ENCODE measurements at regions of chr17 and their contacts with region 1.

Region 1: DNA sequence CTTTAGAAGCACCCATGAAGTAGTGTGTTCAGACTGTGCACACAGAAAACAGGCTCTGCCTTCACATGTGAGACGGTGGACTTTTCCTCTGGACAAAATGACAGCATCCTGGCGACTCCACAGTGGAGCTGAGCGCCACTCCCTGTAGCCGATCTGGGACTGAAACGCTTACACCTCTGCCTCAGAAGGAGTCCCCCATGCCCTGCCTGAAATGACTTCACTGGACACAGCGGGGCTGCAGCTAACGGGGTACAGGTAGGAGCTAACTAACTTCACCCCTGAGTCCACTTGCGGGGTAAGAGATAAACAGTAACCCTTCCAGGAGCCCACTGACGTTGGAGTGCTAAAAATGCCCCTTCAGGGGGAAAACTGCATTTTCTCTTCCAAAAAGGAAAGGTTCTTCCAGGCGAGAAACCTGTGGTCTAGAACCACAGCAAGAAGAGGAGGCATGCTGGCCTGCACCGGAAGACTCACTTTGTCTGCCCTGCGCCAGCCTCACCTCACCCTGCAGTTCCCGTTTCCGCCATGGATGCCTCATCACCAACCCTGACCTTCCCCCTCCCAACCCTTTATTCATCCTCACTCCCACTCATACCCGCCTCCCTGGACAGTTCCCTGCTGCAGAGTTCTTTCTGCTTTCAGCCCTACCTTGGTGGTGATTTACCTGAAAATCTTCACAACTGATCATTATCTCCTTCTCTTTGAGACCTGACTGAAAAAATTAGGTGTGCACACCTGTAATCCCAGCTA is 19.4 kb upstream of the ENDOV start:
- DNase-seq: no peak
- H3K4me3 Mint-ChIP-seq: no peak overlapping the region
- H3K27ac Mint-ChIP-seq: no peak overlapping the region
- H3K4me1 Mint-ChIP-seq: peaks cover 20% of the 10 kb centered on the region
- H3K27me3 Mint-ChIP-seq: no peaks in the 10 kb centered on the region

Region 2: DNA sequence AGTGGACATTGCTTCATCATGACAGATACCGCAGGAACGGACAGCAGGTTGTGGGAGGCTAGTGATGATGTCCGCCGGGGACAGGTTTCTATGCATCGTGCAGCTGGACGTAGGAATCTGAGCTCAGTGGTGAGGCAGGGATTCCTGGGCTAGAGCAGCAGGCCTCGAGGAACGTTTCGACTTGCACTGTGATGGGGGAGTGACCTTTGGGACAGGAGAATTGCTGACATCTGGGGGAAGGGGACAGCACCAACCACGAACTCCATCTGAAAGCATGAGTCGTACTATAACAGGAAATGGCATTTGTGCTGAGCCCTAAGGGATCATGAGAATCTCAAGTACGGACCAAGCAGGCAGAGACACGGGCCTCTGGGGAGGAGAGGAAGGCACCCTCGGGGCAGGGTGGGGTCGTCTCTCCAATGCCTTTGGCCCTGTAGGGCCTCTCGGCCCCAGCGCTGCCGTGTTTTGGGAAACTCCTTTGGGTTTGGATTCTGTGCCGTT is 46.4 kb before region 1 on chr17:
- CTCF ChIA-PET with region 1: no interaction called
- POLR2A ChIA-PET with region 1: no interaction called
- DNase-seq: no peak
- H3K4me3 Mint-ChIP-seq: no peak overlapping the region
- H3K27ac Mint-ChIP-seq: peak overlapping the region; percentile 22
- H3K4me1 Mint-ChIP-seq: peaks cover 24% of the 10 kb centered on the region
- H3K27me3 Mint-ChIP-seq: no peaks in the 10 kb centered on the region

Region 3: DNA sequence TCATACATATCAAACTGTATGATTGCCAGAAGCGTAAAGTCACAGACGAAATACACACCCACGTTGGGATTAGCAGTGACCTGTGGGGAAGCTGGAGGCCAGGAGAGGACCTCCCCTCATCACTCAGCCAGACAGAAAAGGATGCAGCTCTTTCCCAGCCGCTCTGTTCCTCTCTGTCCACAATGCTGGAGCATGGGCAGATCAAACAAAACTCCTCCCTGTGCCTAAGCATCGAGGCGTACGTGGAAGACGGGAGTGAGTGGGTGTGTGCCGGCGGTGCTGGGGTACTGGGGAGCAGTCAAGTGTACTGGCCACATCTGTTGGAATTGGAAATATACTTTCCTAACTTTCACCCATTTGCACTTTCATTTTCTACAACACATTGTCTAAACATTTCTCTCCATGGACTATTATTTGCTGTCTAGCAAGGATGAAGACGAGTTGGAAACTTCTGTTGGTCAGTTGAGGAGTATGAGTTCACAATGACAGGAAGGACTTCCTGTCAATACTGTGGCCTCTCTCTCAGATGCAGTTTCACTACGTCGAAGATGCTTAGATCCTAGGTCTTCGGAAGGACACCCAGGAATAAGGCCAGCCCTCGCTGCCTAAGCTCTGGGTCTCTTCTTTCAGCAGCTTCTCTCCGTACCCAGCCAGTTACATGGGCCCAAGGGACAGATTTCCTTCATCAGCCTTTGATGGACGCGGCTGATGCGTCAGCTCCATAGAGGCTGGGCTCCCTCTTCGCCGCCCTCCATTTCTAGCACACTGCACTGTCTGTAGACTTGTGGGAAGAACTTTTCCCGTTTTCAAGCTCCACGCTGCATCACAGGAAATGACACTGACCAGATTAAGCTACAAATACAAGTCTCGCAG is 11.3 kb before region 1 on chr17:
- CTCF ChIA-PET with region 1: no interaction called
- POLR2A ChIA-PET with region 1: interaction called, 26 read pairs
- DNase-seq: no peak
- H3K4me3 Mint-ChIP-seq: no peak overlapping the region
- H3K27ac Mint-ChIP-seq: peak overlapping the region; percentile 77
- H3K4me1 Mint-ChIP-seq: peaks cover 12% of the 10 kb centered on the region
- H3K27me3 Mint-ChIP-seq: no peaks in the 10 kb centered on the region

Measured in activated CD4-positive, alpha-beta memory T cell treated with anti-CD3 and anti-CD28 coated beads, Interleukin-2, amount 10 ng/mL, durations not matched to agents 7 days and 5 days (primary cell).